ENCODE measurements at regions of chr2 and their contacts with region 1.

Region 1: GRCh38 chr2:28594289-28595108 is 98.6 kb downstream of the PLB1 start:
- DNase-seq: peak; percentile 91
- H3K4me3 Mint-ChIP-seq: peak overlapping the region; percentile 23
- H3K27ac Mint-ChIP-seq: peak overlapping the region; percentile 55
- H3K4me1 Mint-ChIP-seq: peaks cover 15% of the 10 kb centered on the region
- H3K27me3 Mint-ChIP-seq: no peaks in the 10 kb centered on the region

Region 2: DNA sequence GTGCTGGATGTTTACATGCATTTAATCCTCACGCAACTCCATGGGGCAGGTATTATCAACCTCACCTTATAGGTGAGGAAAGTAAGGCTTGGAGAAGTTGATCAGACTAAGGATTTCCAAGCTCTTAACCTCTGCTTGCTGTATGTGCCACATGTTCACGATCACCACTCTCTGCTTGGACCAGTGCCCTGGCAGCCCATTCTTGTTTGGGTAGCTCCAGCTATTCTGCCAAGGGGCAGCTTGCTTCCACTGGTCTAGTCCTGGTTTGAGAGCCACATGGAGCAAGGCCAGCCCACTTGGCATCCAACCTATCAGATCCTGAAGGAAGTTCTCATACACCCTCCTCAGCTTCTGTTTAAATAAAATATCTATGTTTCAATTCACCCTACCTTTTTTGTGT is 84.3 kb before region 1 on chr2:
- CTCF ChIA-PET with region 1: no interaction called
- POLR2A ChIA-PET with region 1: no interaction called
- intact Hi-C with region 1: no loop called
- DNase-seq: no peak
- H3K4me3 Mint-ChIP-seq: no peak overlapping the region
- H3K27ac Mint-ChIP-seq: no peak overlapping the region
- H3K4me1 Mint-ChIP-seq: peaks cover 16% of the 10 kb centered on the region
- H3K27me3 Mint-ChIP-seq: peaks cover 11% of the 10 kb centered on the region

Region 3: GRCh38 chr2:28577791-28578680 is 16.5 kb before region 1 on chr2:
- CTCF ChIA-PET with region 1: interaction called, 41 read pairs
- POLR2A ChIA-PET with region 1: no interaction called
- intact Hi-C with region 1: no loop called
- DNase-seq: no peak
- H3K4me3 Mint-ChIP-seq: no peak overlapping the region
- H3K27ac Mint-ChIP-seq: no peak overlapping the region
- H3K4me1 Mint-ChIP-seq: peaks cover 4% of the 10 kb centered on the region
- H3K27me3 Mint-ChIP-seq: no peaks in the 10 kb centered on the region

Region 4: DNA sequence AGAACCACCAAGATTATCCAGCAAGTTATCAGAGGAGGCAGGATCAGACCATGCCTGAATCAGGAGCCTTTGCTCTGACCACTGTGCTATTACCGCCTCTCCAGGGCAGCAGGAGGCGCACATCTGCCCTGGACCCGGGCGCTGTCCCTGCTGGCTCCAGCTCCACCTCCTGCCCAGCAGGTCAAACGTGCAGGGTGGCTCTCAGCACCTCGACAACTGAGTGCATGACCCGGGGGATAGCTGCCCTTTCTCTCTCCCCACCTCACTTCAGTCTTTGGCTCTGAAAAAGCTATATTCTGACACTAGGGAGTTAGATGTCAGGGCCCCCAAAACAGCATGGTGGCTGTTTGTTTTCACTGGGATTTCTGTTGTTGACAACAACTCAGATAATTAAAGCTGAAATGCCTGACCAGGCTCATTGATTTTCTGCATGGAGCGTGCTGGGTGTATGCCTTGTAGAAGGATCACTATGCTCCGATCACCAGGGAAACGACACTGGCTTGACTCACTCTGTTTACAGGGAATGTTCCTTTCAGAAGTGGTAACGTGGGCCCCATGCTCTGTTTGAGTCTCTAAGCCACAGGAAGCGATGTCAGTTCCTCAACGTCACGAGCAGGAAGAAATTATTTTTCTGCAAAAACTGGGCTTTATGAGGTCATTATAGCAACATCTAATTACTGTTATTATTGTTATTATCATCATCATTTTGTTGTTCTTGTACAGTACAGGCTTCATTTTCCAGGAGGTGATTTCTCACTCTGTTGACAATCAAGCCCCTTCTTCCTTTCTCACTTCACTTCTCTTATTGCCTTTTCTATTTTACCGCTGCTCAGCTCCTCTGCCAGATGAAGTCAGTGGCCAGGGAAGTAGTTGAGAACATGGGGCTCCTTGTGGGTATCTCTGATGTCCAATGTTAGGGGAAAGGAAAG is 26.9 kb after region 1 on chr2:
- CTCF ChIA-PET with region 1: interaction called, 64 read pairs
- POLR2A ChIA-PET with region 1: interaction called, 5 read pairs
- intact Hi-C with region 1: loop called (anchors 1 kb)
- DNase-seq: peak; percentile 85
- H3K4me3 Mint-ChIP-seq: peak overlapping the region; percentile 53
- H3K27ac Mint-ChIP-seq: peak overlapping the region; percentile 98
- H3K4me1 Mint-ChIP-seq: peaks cover 96% of the 10 kb centered on the region
- H3K27me3 Mint-ChIP-seq: no peaks in the 10 kb centered on the region

Region 5: DNA sequence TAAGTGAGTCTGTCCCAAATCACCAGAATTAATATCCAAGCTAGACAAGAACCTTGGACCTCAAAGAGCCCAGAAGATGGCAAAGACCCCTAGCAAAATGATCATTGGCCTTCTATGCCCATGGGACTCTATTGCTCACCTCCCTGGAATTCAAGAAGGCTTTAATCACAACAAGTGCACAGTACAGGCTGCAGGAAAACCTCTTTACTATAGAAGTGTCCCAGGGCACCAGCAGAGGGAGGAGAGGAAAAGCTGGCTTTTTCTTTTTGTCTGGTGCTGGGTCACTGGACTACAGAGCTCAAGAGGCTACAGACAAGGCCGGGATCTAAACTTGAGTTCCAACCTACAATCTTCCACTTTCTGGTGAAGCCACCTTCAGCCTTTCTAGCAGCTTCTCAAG is 68.9 kb after region 1 on chr2:
- CTCF ChIA-PET with region 1: interaction called, 11 read pairs
- POLR2A ChIA-PET with region 1: no interaction called
- intact Hi-C with region 1: no loop called
- DNase-seq: no peak
- H3K4me3 Mint-ChIP-seq: no peak overlapping the region
- H3K27ac Mint-ChIP-seq: no peak overlapping the region
- H3K4me1 Mint-ChIP-seq: peaks cover 2% of the 10 kb centered on the region
- H3K27me3 Mint-ChIP-seq: no peaks in the 10 kb centered on the region

Region 6: DNA sequence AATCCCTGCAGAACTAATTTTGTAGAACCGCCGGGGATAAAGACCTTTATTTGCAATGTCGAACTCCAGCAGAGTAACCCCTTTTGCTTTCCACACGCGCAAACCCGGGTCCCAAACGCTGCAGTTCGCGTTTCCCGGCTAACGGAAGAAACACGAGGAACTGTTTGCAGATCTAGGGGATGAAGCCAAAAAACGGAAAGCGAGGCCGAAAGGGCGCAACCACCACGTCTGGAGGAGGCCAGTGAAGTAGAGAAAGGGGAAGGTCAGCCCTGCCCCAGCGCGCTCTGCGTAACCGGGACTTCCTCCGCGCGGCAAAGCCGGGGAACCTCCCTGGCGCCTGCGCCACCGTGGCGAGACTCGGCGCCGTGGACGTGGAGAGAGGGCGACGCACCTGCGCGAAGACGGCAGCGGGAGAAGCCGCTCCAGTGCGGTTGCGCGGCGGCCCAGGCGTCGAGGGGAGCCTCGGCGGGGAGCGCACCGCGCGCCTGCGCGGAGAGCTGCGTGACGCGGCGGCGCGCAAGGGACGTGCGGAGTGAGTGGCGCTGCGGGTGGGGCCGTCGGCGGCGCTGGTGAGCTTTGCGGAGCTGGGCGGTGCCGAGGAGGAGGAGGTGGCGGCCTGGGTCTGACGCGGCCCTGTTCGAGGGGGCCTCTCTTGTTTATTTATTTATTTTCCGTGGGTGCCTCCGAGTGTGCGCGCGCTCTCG is 156.9 kb after region 1 on chr2 and contains the start of gene PPP1CB:
- CTCF ChIA-PET with region 1: interaction called, 126 read pairs
- POLR2A ChIA-PET with region 1: interaction called, 7 read pairs
- intact Hi-C with region 1: loop called (anchors 1 kb)
- DNase-seq: peak; percentile 96
- H3K4me3 Mint-ChIP-seq: peak within 1 kb of the TSS; percentile 85
- H3K27ac Mint-ChIP-seq: peak within 1 kb of the TSS; percentile 96
- H3K4me1 Mint-ChIP-seq: peaks cover 51% of the 10 kb centered on the region
- H3K27me3 Mint-ChIP-seq: no peaks in the 10 kb centered on the region
- total RNA-seq, gene PPP1CB: 238 to 256 TPM

Region 7: GRCh38 chr2:28780496-28780895 is 186.0 kb after region 1 on chr2:
- CTCF ChIA-PET with region 1: interaction called, 16 read pairs
- POLR2A ChIA-PET with region 1: no interaction called
- intact Hi-C with region 1: no loop called
- DNase-seq: no peak
- H3K4me3 Mint-ChIP-seq: no peak overlapping the region
- H3K27ac Mint-ChIP-seq: peak overlapping the region; percentile 2
- H3K4me1 Mint-ChIP-seq: peaks cover 27% of the 10 kb centered on the region
- H3K27me3 Mint-ChIP-seq: no peaks in the 10 kb centered on the region

Region 8: GRCh38 chr2:28870146-28870891 is 275.8 kb after region 1 on chr2 and contains the start of gene TRMT61B:
- CTCF ChIA-PET with region 1: interaction called, 10 read pairs
- POLR2A ChIA-PET with region 1: no interaction called
- intact Hi-C with region 1: no loop called
- DNase-seq: peak; percentile 98
- H3K4me3 Mint-ChIP-seq: peak within 1 kb of the TSS; percentile 93
- H3K27ac Mint-ChIP-seq: peak within 1 kb of the TSS; percentile 89
- H3K4me1 Mint-ChIP-seq: peaks cover 29% of the 10 kb centered on the region
- H3K27me3 Mint-ChIP-seq: no peaks in the 10 kb centered on the region
- total RNA-seq, gene TRMT61B: 16.7 to 18.1 TPM

Region 9: DNA sequence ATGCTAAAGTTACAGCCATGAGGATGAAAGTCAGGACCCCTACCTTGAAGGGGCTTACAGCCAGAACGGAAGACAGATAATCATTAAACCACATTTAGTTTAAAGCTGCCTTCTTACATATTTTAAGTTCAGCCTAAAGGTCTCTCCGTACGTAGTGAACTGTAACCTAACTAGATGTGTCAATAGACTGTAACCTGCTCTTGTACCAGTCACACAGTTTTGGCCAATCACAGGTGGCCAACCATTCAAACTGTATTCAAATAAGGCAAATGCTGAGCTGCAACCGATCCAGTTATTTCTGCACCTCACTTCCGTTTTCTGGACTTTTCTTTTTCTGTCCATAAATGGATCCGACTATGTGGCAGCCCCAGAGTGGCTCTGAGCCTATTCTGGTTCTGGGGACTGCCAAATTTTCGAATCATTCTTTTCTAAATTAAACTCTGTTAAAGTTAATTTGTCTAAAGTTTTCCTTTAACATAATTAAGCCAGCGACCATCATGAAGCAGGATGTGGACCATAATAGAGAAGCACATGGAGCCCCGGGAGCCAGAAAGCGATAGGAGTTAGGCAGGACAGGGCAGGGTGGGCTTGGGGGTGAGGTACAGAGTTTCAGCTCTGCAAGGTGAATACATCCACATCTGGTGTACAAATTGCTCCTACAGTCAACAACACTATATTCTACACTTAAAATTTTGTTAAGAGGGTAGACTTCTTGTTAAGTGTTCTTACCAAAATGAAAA is 1503.9 kb after region 1 on chr2:
- CTCF ChIA-PET with region 1: no interaction called
- POLR2A ChIA-PET with region 1: no interaction called
- intact Hi-C with region 1: no loop called
- DNase-seq: no peak
- H3K4me3 Mint-ChIP-seq: no peak overlapping the region
- H3K27ac Mint-ChIP-seq: no peak overlapping the region
- H3K4me1 Mint-ChIP-seq: no peaks in the 10 kb centered on the region
- H3K27me3 Mint-ChIP-seq: peaks cover 16% of the 10 kb centered on the region